Activated CD4-positive, alpha-beta memory T cell treated with anti-CD3 and anti-CD28 coated beads, Interleukin-2, amount 10 ng/mL, durations not matched to agents 7 days and 5 days (primary cell): ENCODE measurements at regions of chr6 and their contacts with region 1.

Region 1: GRCh38 chr6:116100419-116101301 is at the start of gene NT5DC1:
- DNase-seq: peak; percentile 88
- H3K4me3 Mint-ChIP-seq: peak within 1 kb of the TSS; percentile 94
- H3K27ac Mint-ChIP-seq: peak within 1 kb of the TSS; percentile 89
- H3K4me1 Mint-ChIP-seq: peaks cover 57% of the 10 kb centered on the region
- H3K27me3 Mint-ChIP-seq: no peaks in the 10 kb centered on the region
- total RNA-seq, gene NT5DC1: 48.3 to 49.4 TPM

Region 2: GRCh38 chr6:116010790-116011401 is 89.8 kb before region 1 on chr6:
- CTCF ChIA-PET with region 1: interaction called, 43 read pairs
- POLR2A ChIA-PET with region 1: no interaction called
- DNase-seq: peak; percentile 57
- H3K4me3 Mint-ChIP-seq: no peak overlapping the region
- H3K27ac Mint-ChIP-seq: no peak overlapping the region
- H3K4me1 Mint-ChIP-seq: peaks cover 11% of the 10 kb centered on the region
- H3K27me3 Mint-ChIP-seq: peaks cover 18% of the 10 kb centered on the region

Region 3: GRCh38 chr6:116087437-116088027 is 13.1 kb before region 1 on chr6:
- CTCF ChIA-PET with region 1: interaction called, 5 read pairs
- POLR2A ChIA-PET with region 1: interaction called, 15 read pairs
- DNase-seq: no peak
- H3K4me3 Mint-ChIP-seq: no peak overlapping the region
- H3K27ac Mint-ChIP-seq: no peak overlapping the region
- H3K4me1 Mint-ChIP-seq: peaks cover 16% of the 10 kb centered on the region
- H3K27me3 Mint-ChIP-seq: peaks cover 12% of the 10 kb centered on the region

Region 4: GRCh38 chr6:116111552-116112528 is 11.2 kb after region 1 on chr6:
- CTCF ChIA-PET with region 1: interaction called, 42 read pairs
- POLR2A ChIA-PET with region 1: interaction called, 11 read pairs
- DNase-seq: peak; percentile 47
- H3K4me3 Mint-ChIP-seq: no peak overlapping the region
- H3K27ac Mint-ChIP-seq: no peak overlapping the region
- H3K4me1 Mint-ChIP-seq: no peaks in the 10 kb centered on the region
- H3K27me3 Mint-ChIP-seq: no peaks in the 10 kb centered on the region

Region 5: DNA sequence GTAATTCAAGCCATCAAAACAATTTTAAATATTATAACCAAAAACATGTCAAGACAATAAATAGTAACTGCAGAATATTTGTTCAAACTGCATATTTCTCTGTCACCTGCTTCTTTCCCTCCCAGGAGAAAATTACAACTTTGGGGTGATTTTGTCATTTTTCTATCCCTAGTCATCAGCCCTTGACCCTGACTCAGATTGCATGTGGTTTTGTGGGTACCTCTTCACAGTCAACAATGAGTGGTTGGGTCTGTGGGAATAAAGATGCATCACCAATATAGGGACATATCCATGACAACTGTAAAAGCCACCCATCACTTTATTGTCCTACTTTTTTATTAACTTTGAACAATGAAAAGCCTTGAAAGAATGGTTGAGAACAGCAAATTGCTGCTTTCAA is 17.9 kb after region 1 on chr6:
- CTCF ChIA-PET with region 1: interaction called, 42 read pairs
- POLR2A ChIA-PET with region 1: interaction called, 11 read pairs
- DNase-seq: no peak
- H3K4me3 Mint-ChIP-seq: no peak overlapping the region
- H3K27ac Mint-ChIP-seq: no peak overlapping the region
- H3K4me1 Mint-ChIP-seq: peaks cover 4% of the 10 kb centered on the region
- H3K27me3 Mint-ChIP-seq: no peaks in the 10 kb centered on the region

Region 6: DNA sequence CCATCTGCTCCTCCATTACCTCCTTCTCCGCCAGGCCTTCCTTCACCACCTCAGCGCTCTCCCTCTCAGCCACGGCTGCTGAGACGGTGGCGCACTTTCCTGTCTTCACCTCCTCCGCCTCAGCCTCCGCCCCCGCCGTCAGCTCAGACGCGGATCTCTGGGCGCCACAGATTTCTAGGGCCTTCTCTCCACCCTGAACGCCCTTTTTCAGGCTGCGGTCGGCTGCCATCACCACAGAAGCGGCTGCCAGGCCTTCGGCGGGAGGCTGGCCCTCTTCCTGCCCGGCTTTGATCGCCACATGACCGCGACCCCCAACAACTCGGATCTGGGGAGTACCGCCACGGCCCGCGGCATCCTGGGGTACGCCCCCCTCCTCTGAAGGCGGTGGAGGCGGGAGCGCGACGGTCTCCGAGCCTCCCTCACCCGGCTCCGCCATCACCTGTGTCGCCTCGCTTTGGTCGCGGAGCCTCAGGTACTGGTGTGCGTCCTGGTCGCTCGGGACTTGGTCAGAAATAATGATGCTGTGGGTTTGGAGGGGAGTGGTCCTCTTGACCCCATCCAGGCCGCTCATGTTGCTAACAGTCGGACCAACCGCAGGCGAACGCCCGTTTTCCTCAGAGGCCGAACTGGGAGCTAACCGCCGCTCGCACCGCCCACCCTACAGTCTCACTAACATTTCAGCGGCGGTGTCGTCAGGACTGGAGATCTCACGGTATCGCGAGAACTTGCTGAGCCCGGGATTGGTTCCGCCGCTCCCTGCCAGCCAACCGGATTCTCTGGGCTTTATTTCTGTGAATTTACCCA is 178.8 kb after region 1 on chr6 and contains the start of gene TSPYL1:
- CTCF ChIA-PET with region 1: no interaction called
- POLR2A ChIA-PET with region 1: interaction called, 14 read pairs
- DNase-seq: peak; percentile 96
- H3K4me3 Mint-ChIP-seq: peak within 1 kb of the TSS; percentile 99
- H3K27ac Mint-ChIP-seq: peak within 1 kb of the TSS; percentile 99
- H3K4me1 Mint-ChIP-seq: peaks cover 51% of the 10 kb centered on the region
- H3K27me3 Mint-ChIP-seq: no peaks in the 10 kb centered on the region
- total RNA-seq, gene TSPYL1: 47.6 to 48.4 TPM